Activated T-helper 1 cell treated with anti-CD3 and anti-CD28 coated beads, Interleukin-12 subunit alpha, Interleukin-12 subunit beta, Interleukin-2, Interleukin-4 antibody, amounts not matched to agents 30 ng/mL and 10 ng/mL and 1 ng/mL, durations not matched to agents 14 hours and 24 hours and 36 hours (primary cell): ENCODE measurements at regions of chr6 and their contacts with region 1.

Region 1: DNA sequence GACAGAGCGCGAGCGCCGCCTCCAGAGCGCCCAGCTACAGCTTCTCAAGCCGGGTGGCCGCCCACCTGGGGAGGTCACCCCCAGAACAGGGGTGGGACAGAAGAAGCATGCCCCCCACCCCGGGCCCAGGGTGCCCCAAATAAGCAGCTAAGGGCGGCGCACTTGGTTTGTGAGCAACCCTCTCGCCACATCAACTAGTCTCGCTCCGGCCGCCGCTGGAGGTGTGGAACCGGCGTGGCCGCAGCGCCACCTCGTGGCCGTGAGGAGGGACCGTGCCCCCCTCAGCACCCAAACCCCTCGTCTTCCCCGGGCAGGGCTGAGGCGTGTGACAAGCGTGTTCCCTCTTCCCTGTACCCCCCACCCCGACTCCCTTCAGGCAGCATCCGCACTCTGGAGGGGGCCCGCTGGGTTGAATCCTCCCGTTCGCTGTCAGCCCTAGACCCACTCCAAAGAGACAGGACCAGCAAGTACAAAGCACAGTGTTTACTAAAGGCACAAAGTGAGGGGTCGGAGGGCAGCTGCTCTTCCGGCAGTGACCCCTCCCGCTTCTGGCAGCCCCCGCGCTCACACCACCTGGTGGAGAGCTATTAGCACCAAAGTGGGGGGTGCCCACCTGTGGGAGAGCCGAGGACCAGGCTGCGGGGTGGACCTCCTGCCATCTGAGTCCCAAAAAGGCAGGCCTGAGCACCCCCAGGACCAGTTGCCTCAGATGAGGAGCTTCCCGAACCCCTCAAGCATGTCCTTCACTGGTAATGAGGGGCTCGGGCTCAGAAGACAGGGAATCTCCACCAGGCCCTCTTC is 45.4 kb downstream of the MDFI start:
- DNase-seq: peak; percentile 71
- H3K4me3 Mint-ChIP-seq: peak overlapping the region; percentile 75
- H3K27ac Mint-ChIP-seq: peak overlapping the region; percentile 73
- H3K4me1 Mint-ChIP-seq: peaks cover 6% of the 10 kb centered on the region
- H3K27me3 Mint-ChIP-seq: no peaks in the 10 kb centered on the region

Region 2: DNA sequence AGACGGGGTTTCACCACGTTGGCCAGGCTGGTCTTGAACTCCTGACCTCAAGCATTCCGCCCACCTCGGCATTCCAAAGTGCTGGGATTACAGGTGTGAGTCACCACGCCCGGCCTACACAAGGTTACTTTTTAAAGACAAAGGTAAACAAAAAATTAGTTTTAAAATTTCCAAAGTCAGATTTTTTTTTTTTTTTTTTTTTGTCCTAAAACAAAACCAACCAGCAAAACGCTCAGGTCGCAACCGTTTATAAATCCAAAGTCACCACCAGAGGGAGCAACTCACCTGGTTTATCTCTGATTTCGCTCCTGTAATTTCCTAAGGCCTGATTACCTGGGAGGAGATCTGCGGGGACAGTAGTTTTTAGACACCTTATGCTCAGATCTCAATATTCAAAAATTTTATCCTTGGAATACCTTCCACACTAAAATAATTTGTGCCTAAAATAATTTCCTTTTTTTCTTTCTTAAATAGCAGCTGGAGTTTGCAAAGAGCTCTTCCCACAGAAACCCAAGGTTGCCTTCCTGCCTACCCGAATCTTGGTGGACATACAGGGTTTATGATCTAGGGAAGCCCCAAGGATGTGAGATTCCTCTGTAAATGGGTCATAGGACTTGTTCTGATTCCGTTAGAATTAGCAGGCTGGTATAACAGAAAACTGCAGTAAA is 377.4 kb before region 1 on chr6:
- intact Hi-C with region 1: loop called (anchors 5 kb)
- DNase-seq: peak; percentile 25
- H3K4me3 Mint-ChIP-seq: no peak overlapping the region
- H3K27ac Mint-ChIP-seq: no peak overlapping the region
- H3K4me1 Mint-ChIP-seq: peaks cover 15% of the 10 kb centered on the region
- H3K27me3 Mint-ChIP-seq: peaks cover 17% of the 10 kb centered on the region

Region 3: GRCh38 chr6:41463062-41463930 is 220.4 kb before region 1 on chr6:
- intact Hi-C with region 1: loop called (anchors 5 kb)
- DNase-seq: no peak
- H3K4me3 Mint-ChIP-seq: no peak overlapping the region
- H3K27ac Mint-ChIP-seq: no peak overlapping the region
- H3K4me1 Mint-ChIP-seq: no peaks in the 10 kb centered on the region
- H3K27me3 Mint-ChIP-seq: peaks cover 53% of the 10 kb centered on the region

Region 4: GRCh38 chr6:41602864-41603608 is 80.7 kb before region 1 on chr6:
- intact Hi-C with region 1: loop called (anchors 1 kb)
- DNase-seq: peak; percentile 68
- H3K4me3 Mint-ChIP-seq: no peak overlapping the region
- H3K27ac Mint-ChIP-seq: no peak overlapping the region
- H3K4me1 Mint-ChIP-seq: peaks cover 6% of the 10 kb centered on the region
- H3K27me3 Mint-ChIP-seq: peaks cover 7% of the 10 kb centered on the region

Region 5: DNA sequence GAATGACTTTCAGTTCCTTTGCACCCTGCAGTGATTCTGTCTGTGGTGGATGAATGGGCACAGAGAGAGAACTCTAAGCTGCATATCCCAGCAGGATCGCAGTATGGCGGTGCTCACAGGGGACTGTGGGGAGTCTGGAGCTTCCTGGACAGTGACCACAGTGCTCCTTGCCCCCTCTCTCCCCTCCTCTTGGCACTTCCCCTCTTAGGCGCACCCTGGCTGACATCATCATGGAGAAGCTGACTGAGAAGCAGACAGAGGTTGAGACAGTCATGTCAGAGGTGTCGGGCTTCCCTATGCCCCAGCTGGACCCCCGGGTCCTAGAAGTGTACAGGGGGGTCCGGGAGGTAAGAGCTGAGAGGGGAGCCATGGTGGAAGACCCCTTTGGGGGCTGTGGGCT is 246.2 kb after region 1 on chr6:
- intact Hi-C with region 1: no loop called
- DNase-seq: no peak
- H3K4me3 Mint-ChIP-seq: no peak overlapping the region
- H3K27ac Mint-ChIP-seq: no peak overlapping the region
- H3K4me1 Mint-ChIP-seq: peaks cover 46% of the 10 kb centered on the region
- H3K27me3 Mint-ChIP-seq: no peaks in the 10 kb centered on the region